Breast epithelium (tissue), 4 donors: ENCODE measurements at regions of chr20 and their contacts with region 1.

Region 1: GRCh38 chr20:59761153-59761552 is 156.8 kb downstream of the PHACTR3 start:
- DNase-seq: no peak
- H3K4me3 ChIP-seq: no peak overlapping the region
- H3K27ac ChIP-seq: no peak overlapping the region
- H3K4me1 ChIP-seq: no peaks in the 10 kb centered on the region
- H3K27me3 ChIP-seq: peaks cover 0 to 21% of the 10 kb centered on the region in 2 donors
- CTCF ChIP-seq: no peak
- POLR2A ChIP-seq: no peak

Region 2: DNA sequence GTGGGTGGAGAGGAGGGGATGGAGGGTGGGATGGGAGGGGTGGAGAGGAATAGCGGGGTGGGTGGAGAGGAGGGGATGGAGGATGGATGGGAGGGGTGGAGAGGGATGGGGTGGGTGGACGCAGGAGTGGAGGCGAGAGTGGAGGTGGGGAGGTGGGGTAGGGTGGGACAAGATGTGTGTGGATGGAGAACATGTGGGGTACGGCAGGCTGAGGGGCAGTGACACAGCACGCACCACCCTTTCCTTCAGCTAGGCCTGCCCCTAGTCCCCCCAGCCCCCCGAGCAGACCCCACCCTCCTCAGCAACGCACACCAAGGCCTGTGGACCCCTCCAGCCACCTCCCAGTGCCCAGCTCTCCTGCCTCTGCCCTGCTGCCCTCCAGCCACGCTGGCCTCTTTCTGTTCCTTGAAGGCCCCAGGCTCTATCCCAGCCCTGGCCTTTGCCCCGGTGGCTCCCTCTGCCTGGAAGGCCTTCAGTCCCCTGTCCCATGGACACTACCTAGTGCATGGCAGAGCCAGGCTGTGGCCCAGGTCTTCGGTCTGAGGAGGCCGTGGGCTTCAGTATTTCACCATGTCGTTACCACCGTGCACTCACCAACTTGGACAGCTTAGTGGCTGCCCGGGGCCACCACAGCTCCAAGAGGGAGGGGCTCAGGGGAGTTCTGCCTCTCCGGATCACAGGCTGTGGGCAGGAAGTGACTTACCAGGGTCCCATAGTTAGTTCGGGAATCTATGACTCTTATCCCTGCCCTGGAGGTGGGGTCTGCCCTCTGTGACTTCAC is 1973.0 kb before region 1 on chr20:
- intact Hi-C with region 1: loop called (anchors 5 kb)
- DNase-seq: no peak
- H3K4me3 ChIP-seq: no peak overlapping the region
- H3K27ac ChIP-seq: no peak overlapping the region
- H3K4me1 ChIP-seq: no peaks in the 10 kb centered on the region
- H3K27me3 ChIP-seq: no peaks in the 10 kb centered on the region
- CTCF ChIP-seq: no peak
- POLR2A ChIP-seq: no peak

Region 3: GRCh38 chr20:59749301-59749700 is 11.9 kb before region 1 on chr20:
- intact Hi-C with region 1: no loop called
- DNase-seq: no peak
- H3K4me3 ChIP-seq: no peak overlapping the region
- H3K27ac ChIP-seq: peak overlapping the region in 1 of 2 donors; percentile 23
- H3K4me1 ChIP-seq: no peaks in the 10 kb centered on the region
- H3K27me3 ChIP-seq: peaks cover 0 to 41% of the 10 kb centered on the region in 2 donors
- CTCF ChIP-seq: no peak
- POLR2A ChIP-seq: no peak